CD4-positive, alpha-beta T cell (primary cell): ENCODE measurements at regions of chr9 and their contacts with region 1.

Region 1: DNA sequence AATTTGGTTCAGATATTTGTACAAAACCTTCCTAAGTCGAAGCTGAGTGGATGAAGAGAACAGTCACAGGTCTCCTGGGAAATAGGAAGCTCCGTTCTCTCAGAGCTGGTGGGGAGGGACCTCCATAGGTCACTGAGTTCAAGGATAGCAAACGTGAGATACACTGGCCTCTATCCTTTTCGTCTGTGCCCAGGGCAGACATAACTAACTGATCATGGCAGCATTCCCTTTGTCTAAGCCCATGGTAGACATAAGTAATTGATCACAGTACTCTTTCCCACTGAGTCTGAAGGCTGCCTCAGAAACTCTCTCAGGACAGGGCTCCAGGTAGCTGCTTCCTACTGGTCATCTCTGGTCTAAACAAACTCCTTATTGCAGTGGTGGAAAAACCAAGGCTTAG is 12.3 kb upstream of the CORO2A start:
- DNase-seq: no peak
- ATAC-seq: no peak
- H3K4me3 ChIP-seq: no peak overlapping the region
- H3K4me3 Mint-ChIP-seq: no peak overlapping the region
- H3K27ac ChIP-seq: no peak overlapping the region
- H3K27ac Mint-ChIP-seq: no peak overlapping the region
- H3K4me1 ChIP-seq: peaks cover 8% of the 10 kb centered on the region
- H3K4me1 Mint-ChIP-seq: peaks cover 6% of the 10 kb centered on the region
- H3K27me3 ChIP-seq: no peaks in the 10 kb centered on the region
- H3K27me3 Mint-ChIP-seq: no peaks in the 10 kb centered on the region
- CTCF ChIP-seq: no peak

Region 2: GRCh38 chr9:98185611-98186171 is 19.0 kb before region 1 on chr9:
- CTCF ChIA-PET with region 1: no interaction called
- POLR2A ChIA-PET with region 1: no interaction called
- intact Hi-C with region 1: no loop called
- DNase-seq: no peak
- ATAC-seq: no peak
- H3K4me3 ChIP-seq: no peak overlapping the region
- H3K4me3 Mint-ChIP-seq: no peak overlapping the region
- H3K27ac ChIP-seq: no peak overlapping the region
- H3K27ac Mint-ChIP-seq: no peak overlapping the region
- H3K4me1 ChIP-seq: peaks cover 17% of the 10 kb centered on the region
- H3K4me1 Mint-ChIP-seq: peaks cover 64% of the 10 kb centered on the region
- H3K27me3 ChIP-seq: no peaks in the 10 kb centered on the region
- H3K27me3 Mint-ChIP-seq: no peaks in the 10 kb centered on the region
- CTCF ChIP-seq: no peak

Region 3: DNA sequence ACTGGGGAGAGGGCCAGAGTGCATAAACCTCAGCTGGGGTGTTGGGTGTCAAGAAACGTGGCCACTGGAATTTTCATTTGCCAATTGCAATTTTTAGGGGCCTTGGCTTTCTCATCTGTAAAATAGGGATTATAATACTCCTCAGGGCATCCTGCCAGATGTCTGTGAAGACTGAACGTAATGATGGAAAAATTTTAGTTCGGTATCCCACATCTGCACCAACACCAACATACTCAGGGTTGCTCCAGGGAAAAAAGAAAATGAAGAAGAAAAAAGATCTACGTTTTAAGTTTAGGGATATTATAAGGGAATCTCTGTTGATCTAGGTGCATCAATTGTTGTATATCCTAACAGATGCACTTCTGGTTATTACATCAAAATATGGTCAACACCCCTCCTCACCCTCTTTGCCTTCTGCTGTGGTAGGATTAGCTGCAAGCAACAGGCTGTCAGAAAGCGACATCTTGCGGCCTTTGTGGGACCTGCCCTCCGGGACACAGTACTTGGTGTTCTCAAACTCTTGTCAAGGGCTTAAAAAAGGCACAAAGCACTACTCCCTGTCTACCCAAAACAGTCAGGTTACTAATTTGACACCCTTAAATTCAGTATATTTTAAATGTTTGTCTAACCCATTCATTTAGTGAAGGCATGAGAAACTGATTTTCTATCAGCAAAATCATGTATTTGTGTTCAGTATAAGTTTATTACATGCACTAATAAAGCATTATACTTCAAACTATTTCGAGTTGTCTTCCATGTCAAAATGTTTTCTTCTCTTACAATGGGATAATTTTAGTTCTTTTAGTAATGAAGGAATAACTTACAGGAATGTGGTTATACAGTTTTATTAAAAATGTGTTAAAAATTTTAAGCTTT is 59.0 kb after region 1 on chr9:
- CTCF ChIA-PET with region 1: interaction called, 22 read pairs
- POLR2A ChIA-PET with region 1: no interaction called
- intact Hi-C with region 1: loop called (anchors 1 kb)
- DNase-seq: peak; percentile 73 to 90 (median 82)
- ATAC-seq: peak; percentile 100
- H3K4me3 ChIP-seq: no peak overlapping the region
- H3K4me3 Mint-ChIP-seq: no peak overlapping the region
- H3K27ac ChIP-seq: no peak overlapping the region
- H3K27ac Mint-ChIP-seq: no peak overlapping the region
- H3K4me1 ChIP-seq: no peaks in the 10 kb centered on the region
- H3K4me1 Mint-ChIP-seq: no peaks in the 10 kb centered on the region
- H3K27me3 ChIP-seq: no peaks in the 10 kb centered on the region
- H3K27me3 Mint-ChIP-seq: peaks cover 9% of the 10 kb centered on the region
- CTCF ChIP-seq: peak; percentile 97